Left ventricle myocardium superior (tissue), 1 donor: ENCODE measurements at regions of chr5 and their contacts with region 1.

Region 1: DNA sequence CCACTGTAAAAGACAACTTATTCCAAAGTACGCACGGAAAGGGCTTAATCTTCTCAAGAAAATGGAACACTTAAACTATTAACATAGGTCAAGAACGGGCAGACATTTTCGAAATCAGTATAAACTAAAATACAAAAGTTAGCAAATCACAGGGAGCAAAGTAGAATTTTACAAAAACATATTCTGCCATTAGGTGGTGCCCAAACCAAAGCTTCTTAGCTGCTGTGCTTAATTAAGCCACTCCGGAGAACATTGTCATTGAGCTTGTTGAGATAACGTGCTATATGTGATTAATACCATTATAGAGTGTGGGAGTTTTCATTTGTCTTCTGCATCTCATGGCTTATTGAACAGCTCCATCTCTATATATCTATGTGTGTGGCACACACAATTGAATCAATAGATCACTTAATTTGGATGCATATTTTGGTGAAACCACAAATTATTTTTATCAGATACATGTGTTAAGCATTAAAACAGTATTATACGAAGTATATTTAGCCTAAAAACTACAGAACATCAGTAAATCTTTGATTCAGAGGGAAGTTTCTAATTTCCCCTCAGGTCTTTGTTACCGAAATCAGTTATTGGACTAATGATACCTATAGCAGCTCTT is 23.4 kb downstream of the UBLCP1 start:
- DNase-seq: no peak
- ATAC-seq: peak; percentile 45

Region 2: DNA sequence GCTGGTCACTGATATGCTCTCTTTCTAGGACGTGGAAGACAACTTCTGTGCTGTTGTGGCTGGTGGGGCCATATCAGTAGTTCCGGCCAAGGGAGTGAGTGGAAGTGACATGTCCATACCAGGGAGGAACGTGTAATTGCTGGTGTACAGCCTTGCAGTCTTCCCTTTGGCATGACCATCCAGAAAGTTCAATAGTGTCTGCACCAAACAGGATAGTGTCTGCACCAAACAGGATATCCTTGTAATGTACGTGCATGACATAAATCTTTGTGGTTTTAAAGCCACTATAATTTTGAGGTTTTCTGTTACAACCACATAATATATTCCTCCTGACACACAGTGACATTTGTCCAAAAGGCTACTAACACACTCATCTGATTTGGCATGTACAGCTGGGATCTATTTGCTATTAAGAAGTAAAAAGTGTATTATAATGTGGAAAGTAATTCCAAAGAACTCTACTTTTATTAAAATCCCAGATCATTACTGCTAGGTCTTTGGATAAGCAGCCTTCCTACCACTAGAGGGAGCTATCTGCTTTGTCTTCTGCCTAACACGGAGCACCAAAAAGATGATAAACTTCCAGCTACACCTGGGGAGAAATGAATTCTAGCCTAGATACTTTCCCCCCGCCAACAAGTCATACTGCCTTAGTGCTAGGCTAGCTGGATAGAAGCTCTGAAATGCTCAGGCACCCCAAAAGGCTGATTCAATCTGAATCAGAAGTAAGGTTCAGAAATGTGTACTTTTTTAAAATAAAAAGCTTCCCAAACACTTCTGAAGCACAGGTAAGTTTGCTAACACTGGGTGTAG is 129.9 kb before region 1 on chr5:
- intact Hi-C with region 1: loop called (anchors 10 kb)
- DNase-seq: no peak
- ATAC-seq: peak; percentile 86

Region 3: DNA sequence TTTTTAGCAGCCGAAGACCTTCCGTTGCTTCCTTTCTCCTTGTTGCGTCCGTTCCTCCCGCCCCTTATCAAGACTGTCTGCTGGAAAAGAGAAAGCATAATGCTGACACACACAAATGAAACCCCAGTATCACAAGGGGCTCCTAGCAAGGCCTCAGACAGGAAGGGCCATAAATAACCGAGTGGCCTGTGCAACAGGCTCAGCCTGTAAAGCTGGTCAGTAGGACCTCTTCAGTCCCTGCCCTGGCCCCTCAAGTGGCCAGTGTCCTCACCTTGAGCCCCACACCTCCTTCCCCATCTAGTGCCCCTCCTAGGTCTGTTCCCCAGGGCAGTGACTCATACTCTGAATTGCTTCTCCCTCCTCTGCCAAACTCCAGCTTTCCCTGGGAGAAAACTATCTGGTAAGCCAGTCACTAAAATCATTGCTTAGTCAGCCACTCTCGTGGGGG is 218.4 kb after region 1 on chr5:
- intact Hi-C with region 1: no loop called
- DNase-seq: peak; percentile 50
- ATAC-seq: peak; percentile 82

Region 4: DNA sequence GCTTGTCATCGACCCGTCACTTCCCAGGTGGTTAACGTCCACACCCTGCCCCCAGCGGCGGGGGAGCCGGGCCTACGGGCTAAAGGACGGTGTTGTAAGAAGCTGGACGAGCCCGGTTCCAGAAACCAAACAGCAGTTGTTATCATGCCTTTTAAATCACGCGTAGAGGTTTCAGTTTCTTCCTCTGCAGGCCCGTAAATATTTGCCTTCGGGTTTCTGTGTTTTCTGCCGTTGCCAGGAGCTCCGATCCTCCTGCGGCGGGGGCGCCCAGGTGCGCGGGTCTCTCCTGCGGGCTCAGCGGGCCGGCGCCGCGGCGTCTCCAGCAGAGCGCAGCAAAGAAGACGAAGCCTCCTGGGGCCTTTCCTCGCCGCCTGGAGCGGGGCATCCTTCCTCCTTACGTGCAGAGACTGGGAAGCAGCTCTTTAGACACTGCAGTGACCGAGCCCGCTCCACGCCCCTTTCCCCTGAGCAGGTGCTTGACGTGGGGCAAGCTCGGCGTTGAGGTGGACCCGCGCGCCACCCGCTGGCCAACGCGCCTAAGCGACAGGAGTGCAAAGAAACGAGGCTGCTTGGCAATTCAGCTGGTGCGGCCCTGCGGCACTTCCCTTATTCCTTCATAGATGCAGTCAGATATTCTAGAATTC is 700.6 kb after region 1 on chr5:
- intact Hi-C with region 1: loop called (anchors 5 kb)
- DNase-seq: peak; percentile 87
- ATAC-seq: peak; percentile 98